ENCODE measurements at regions of chr15 and their contacts with region 1.

Region 1: GRCh38 chr15:60673918-60674558 is 195.1 kb upstream of the ICE2 start:
- DNase-seq: peak; percentile 97
- H3K4me3 ChIP-seq: no peak overlapping the region
- H3K27ac ChIP-seq: peak overlapping the region; percentile 68
- H3K4me1 ChIP-seq: peaks cover 9% of the 10 kb centered on the region
- H3K27me3 ChIP-seq: no peaks in the 10 kb centered on the region
- CTCF ChIP-seq: no peak
- POLR2A ChIP-seq: no peak

Region 2: DNA sequence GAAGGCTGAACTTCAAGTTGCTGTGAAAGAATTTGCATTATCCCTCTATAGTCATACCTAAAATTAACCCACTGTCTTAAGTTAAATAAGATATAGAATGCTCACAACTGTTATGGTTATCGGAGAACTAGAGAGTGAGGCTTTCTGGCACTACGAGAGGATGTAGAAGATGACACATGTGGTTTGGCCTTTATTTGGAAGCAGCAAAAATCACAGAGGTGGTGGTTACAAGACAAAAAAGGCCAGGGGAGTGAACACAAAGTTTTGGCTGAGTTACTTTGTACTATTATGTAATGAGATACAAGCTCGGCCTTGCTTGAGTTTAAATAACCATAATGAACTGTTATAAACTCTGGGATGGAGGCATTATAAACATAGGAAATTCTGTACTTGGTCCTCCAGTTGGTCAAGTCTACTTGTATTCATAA is 116.8 kb before region 1 on chr15:
- CTCF ChIA-PET with region 1: no interaction called
- POLR2A ChIA-PET with region 1: no interaction called
- dilution Hi-C with region 1: no loop called
- intact Hi-C with region 1: no loop called
- DNase-seq: no peak
- H3K4me3 ChIP-seq: no peak overlapping the region
- H3K27ac ChIP-seq: no peak overlapping the region
- H3K4me1 ChIP-seq: no peaks in the 10 kb centered on the region
- H3K27me3 ChIP-seq: no peaks in the 10 kb centered on the region
- CTCF ChIP-seq: no peak
- POLR2A ChIP-seq: no peak

Region 3: GRCh38 chr15:60644903-60645302 is 29.1 kb before region 1 on chr15:
- CTCF ChIA-PET with region 1: interaction called, 4 read pairs
- POLR2A ChIA-PET with region 1: no interaction called
- dilution Hi-C with region 1: no loop called
- intact Hi-C with region 1: loop called (anchors 2 kb)
- DNase-seq: peak; percentile 87
- H3K4me3 ChIP-seq: no peak overlapping the region
- H3K27ac ChIP-seq: peak overlapping the region; percentile 46
- H3K4me1 ChIP-seq: peaks cover 23% of the 10 kb centered on the region
- H3K27me3 ChIP-seq: no peaks in the 10 kb centered on the region
- CTCF ChIP-seq: no peak
- POLR2A ChIP-seq: no peak

Region 4: GRCh38 chr15:60655252-60655651 is 18.8 kb before region 1 on chr15:
- CTCF ChIA-PET with region 1: interaction called, 3 read pairs
- POLR2A ChIA-PET with region 1: no interaction called
- dilution Hi-C with region 1: no loop called
- intact Hi-C with region 1: loop called (anchors 2 kb)
- DNase-seq: no peak
- H3K4me3 ChIP-seq: no peak overlapping the region
- H3K27ac ChIP-seq: no peak overlapping the region
- H3K4me1 ChIP-seq: no peaks in the 10 kb centered on the region
- H3K27me3 ChIP-seq: no peaks in the 10 kb centered on the region
- CTCF ChIP-seq: no peak
- POLR2A ChIP-seq: no peak

Region 5: DNA sequence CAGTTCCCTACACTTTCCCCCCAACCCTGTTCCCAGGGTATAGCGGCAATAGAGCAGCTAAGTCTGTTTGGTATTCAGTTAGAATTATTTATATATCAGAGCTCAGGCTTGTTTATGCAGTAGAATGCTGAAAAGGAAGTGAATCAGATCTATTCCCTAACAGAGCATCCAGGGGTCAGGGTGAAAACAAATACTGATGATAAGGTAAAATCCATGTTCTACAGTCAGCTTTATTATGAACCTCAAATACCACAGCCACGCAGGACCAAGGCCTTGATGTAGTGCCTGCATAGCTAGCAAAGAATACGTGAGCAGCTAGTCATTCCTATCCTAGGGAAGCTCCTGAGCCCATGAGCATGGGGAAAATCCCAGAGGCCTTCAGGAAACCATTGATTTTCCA is 34.6 kb after region 1 on chr15:
- CTCF ChIA-PET with region 1: interaction called, 5 read pairs
- POLR2A ChIA-PET with region 1: no interaction called
- dilution Hi-C with region 1: no loop called
- intact Hi-C with region 1: loop called (anchors 1 kb)
- DNase-seq: peak; percentile 89
- H3K4me3 ChIP-seq: no peak overlapping the region
- H3K27ac ChIP-seq: peak overlapping the region; percentile 46
- H3K4me1 ChIP-seq: peaks cover 24% of the 10 kb centered on the region
- H3K27me3 ChIP-seq: no peaks in the 10 kb centered on the region
- CTCF ChIP-seq: no peak
- POLR2A ChIP-seq: no peak

Region 6: GRCh38 chr15:60787837-60788691 is 114.0 kb after region 1 on chr15:
- CTCF ChIA-PET with region 1: interaction called, 7 read pairs
- POLR2A ChIA-PET with region 1: no interaction called
- dilution Hi-C with region 1: no loop called
- intact Hi-C with region 1: loop called (anchors 5 kb)
- DNase-seq: peak; percentile 31
- H3K4me3 ChIP-seq: no peak overlapping the region
- H3K27ac ChIP-seq: no peak overlapping the region
- H3K4me1 ChIP-seq: no peaks in the 10 kb centered on the region
- H3K27me3 ChIP-seq: no peaks in the 10 kb centered on the region
- CTCF ChIP-seq: peak; percentile 38 to 39
- POLR2A ChIP-seq: no peak

Measured in endothelial cell of umbilical vein (primary cell).